Calu3 (cell line): ENCODE measurements at regions of chr7 and their contacts with region 1.

Region 1: DNA sequence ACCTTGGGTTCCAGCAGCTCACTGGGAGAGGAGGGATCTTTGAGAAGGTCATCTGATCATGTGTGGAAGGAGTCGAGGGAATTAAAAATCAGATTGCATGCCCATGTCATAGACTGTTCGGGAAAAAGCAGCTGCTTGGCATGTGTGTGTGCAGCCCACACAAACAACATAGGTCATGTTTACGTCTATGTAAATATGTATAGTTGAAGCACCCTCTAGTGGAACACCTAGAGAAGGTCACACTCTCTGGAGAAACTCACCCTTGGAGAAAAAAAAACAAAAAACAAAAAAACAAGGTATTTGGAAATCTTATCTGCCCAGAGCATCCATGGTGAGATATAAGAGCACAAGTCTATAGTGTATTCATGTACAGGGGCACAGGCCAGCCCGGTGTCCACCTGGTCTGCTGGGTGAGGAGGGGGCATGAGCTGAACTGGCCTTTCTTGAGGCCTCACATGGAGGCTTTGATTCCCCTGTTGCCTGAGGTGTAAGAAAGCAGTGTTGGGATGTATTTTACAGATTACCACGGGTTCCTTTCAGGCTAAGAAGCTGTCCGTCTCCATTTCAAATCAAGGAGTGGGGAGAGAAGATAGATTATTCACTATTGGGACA is 98.0 kb downstream of the NPY start:
- DNase-seq: no peak
- H3K4me3 Mint-ChIP-seq: no peak overlapping the region
- H3K27ac Mint-ChIP-seq: no peak overlapping the region
- H3K4me1 Mint-ChIP-seq: peaks cover 13% of the 10 kb centered on the region
- H3K27me3 Mint-ChIP-seq: peaks cover 71% of the 10 kb centered on the region
- CTCF ChIP-seq: peak; percentile 78

Region 2: GRCh38 chr7:23863209-23863798 is 518.7 kb before region 1 on chr7:
- CTCF ChIA-PET with region 1: no interaction called
- intact Hi-C with region 1: loop called (anchors 2 kb)
- DNase-seq: peak; percentile 36
- H3K4me3 Mint-ChIP-seq: no peak overlapping the region
- H3K27ac Mint-ChIP-seq: no peak overlapping the region
- H3K4me1 Mint-ChIP-seq: peaks cover 13% of the 10 kb centered on the region
- H3K27me3 Mint-ChIP-seq: no peaks in the 10 kb centered on the region
- CTCF ChIP-seq: peak; percentile 75